Posterior cingulate gyrus (tissue), 11 donors: ENCODE measurements at regions of chr7 and their contacts with region 1.

Region 1: GRCh38 chr7:105156731-105157130 is 142.7 kb downstream of the KMT2E start:
- DNase-seq: no peak

Region 2: DNA sequence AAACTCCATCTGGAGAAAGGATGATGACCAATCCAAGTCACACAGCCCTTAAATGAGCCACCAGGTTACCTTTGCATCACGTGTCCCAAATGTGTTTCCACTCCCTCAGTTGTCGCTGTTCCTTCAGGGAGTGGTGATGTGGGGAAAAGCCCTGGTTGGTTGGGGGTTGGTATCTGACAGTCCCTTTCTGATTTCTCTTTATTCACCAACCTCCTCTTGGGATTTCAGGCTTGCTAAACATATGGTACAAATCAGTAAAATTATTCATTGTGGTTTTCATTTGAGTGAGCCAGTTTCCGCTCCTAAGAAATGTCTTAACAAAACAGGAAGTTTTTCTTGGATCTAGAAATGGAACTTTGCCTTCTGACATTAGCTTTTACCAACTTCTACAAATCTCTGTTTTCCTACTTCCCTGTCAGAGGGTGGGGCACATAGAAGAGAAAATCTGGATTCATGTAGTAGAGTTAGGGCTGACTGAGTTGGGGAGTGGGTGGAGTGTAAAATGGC is 182.8 kb before region 1 on chr7:
- intact Hi-C with region 1: no loop called
- DNase-seq: no peak

Region 3: DNA sequence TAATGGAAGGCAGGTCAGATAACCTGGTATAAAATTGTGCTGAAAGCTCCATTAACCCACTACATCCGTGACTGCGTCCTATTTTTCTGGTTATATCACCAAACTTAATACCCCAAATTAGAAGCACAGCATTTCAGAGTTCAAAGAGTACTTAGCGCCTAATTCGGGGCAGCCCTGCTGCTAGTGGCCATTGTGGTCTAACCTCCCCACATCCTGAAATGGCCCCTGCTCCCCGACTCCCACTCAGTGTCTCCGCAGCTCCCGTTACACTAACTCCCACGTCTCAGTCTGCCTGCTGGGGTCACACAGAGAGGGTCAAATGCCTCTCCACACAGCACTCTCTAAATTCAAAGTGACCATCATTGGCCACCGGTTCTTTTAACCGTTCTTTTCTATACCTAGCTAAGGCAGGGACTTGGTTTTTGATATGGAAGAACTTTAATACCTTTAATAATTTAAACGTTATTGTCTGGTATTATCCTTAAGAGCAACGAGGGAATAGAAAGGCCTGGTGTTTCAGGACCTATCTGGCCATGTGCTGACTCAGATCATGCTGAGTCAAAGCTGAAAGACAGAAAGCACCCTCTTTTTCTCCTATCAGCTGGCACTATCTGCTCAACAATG is 25.6 kb before region 1 on chr7:
- intact Hi-C with region 1: no loop called
- DNase-seq: no peak

Region 4: GRCh38 chr7:105198223-105198622 is 41.5 kb after region 1 on chr7:
- intact Hi-C with region 1: loop called (anchors 5 kb)
- DNase-seq: no peak

Region 5: GRCh38 chr7:105336009-105336408 is 179.3 kb after region 1 on chr7:
- intact Hi-C with region 1: loop called (anchors 2 kb)
- DNase-seq: no peak

Region 6: GRCh38 chr7:105402221-105403095 is 245.7 kb after region 1 on chr7:
- intact Hi-C with region 1: no loop called
- DNase-seq: no peak